CD8-positive, alpha-beta T cell (primary cell): ENCODE measurements at regions of chr14 and their contacts with region 1.

Region 1: GRCh38 chr14:94080471-94081289 is at the start of gene DDX24:
- DNase-seq: peak; percentile 94 to 99 (median 96)
- ATAC-seq: peak; percentile 93
- H3K4me3 ChIP-seq: peak within 1 kb of the TSS; percentile 72 to 87
- H3K4me3 Mint-ChIP-seq: peak within 1 kb of the TSS; percentile 99
- H3K27ac ChIP-seq: peak within 1 kb of the TSS; percentile 92 to 98
- H3K27ac Mint-ChIP-seq: peak within 1 kb of the TSS; percentile 99
- H3K4me1 ChIP-seq: peaks cover 38% of the 10 kb centered on the region
- H3K4me1 Mint-ChIP-seq: peaks cover 48% of the 10 kb centered on the region
- H3K27me3 ChIP-seq: no peaks in the 10 kb centered on the region
- H3K27me3 Mint-ChIP-seq: no peaks in the 10 kb centered on the region
- CTCF ChIP-seq: no peak
- total RNA-seq, gene DDX24: 769 to 779 TPM

Region 2: GRCh38 chr14:93332853-93333630 is 747.6 kb before region 1 on chr14 and contains the start of gene BTBD7:
- CTCF ChIA-PET with region 1: no interaction called
- POLR2A ChIA-PET with region 1: no interaction called
- intact Hi-C with region 1: loop called in 1 of 2 experiments (anchors 5 kb)
- DNase-seq: peak; percentile 87 to 98 (median 94)
- ATAC-seq: peak; percentile 92
- H3K4me3 ChIP-seq: peak within 1 kb of the TSS; percentile 81 to 85
- H3K4me3 Mint-ChIP-seq: peak within 1 kb of the TSS; percentile 95
- H3K27ac ChIP-seq: peak within 1 kb of the TSS; percentile 80 to 83
- H3K27ac Mint-ChIP-seq: peak within 1 kb of the TSS; percentile 95
- H3K4me1 ChIP-seq: peaks cover 27% of the 10 kb centered on the region
- H3K4me1 Mint-ChIP-seq: peaks cover 50% of the 10 kb centered on the region
- H3K27me3 ChIP-seq: no peaks in the 10 kb centered on the region
- H3K27me3 Mint-ChIP-seq: no peaks in the 10 kb centered on the region
- CTCF ChIP-seq: no peak
- total RNA-seq, gene BTBD7: 22.9 to 23.5 TPM

Region 3: GRCh38 chr14:94051115-94051514 is 29.6 kb before region 1 on chr14:
- CTCF ChIA-PET with region 1: interaction called, 4 read pairs
- POLR2A ChIA-PET with region 1: interaction called, 3 read pairs
- intact Hi-C with region 1: loop called in 1 of 2 experiments (anchors 2 kb)
- DNase-seq: peak in 2 of 9 experiments; percentile 5 to 6
- ATAC-seq: no peak
- H3K4me3 ChIP-seq: no peak overlapping the region
- H3K4me3 Mint-ChIP-seq: no peak overlapping the region
- H3K27ac ChIP-seq: no peak overlapping the region
- H3K27ac Mint-ChIP-seq: no peak overlapping the region
- H3K4me1 ChIP-seq: no peaks in the 10 kb centered on the region
- H3K4me1 Mint-ChIP-seq: peaks cover 15% of the 10 kb centered on the region
- H3K27me3 ChIP-seq: no peaks in the 10 kb centered on the region
- H3K27me3 Mint-ChIP-seq: no peaks in the 10 kb centered on the region
- CTCF ChIP-seq: no peak

Region 4: GRCh38 chr14:94180655-94181271 is 100.1 kb after region 1 on chr14:
- CTCF ChIA-PET with region 1: interaction called, 3 read pairs
- POLR2A ChIA-PET with region 1: interaction called, 8 read pairs
- intact Hi-C with region 1: loop called (anchors 2 kb)
- DNase-seq: peak in 3 of 9 experiments; percentile 32 to 76 (median 68)
- ATAC-seq: peak; percentile 86
- H3K4me3 ChIP-seq: no peak overlapping the region
- H3K4me3 Mint-ChIP-seq: peak overlapping the region; percentile 49
- H3K27ac ChIP-seq: no peak overlapping the region
- H3K27ac Mint-ChIP-seq: peak overlapping the region; percentile 63
- H3K4me1 ChIP-seq: no peaks in the 10 kb centered on the region
- H3K4me1 Mint-ChIP-seq: peaks cover 9% of the 10 kb centered on the region
- H3K27me3 ChIP-seq: peaks cover 0 to 2% of the 10 kb centered on the region in 2 experiments
- H3K27me3 Mint-ChIP-seq: peaks cover 15% of the 10 kb centered on the region
- CTCF ChIP-seq: peak; percentile 81